Naive thymus-derived CD8-positive, alpha-beta T cell (primary cell): ENCODE measurements at regions of chr2 and their contacts with region 1.

Region 1: GRCh38 chr2:201780674-201781581 is at the start of gene ALS2:
- DNase-seq: peak; percentile 88 to 99 (median 95)
- ATAC-seq: peak; percentile 87 to 91
- H3K4me3 Mint-ChIP-seq: peak within 1 kb of the TSS; percentile 93 to 100 (median 97)
- H3K27ac Mint-ChIP-seq: peak within 1 kb of the TSS; percentile 94 to 100 (median 99)
- H3K4me1 Mint-ChIP-seq: peaks cover 11 to 29% (median 27%) of the 10 kb centered on the region in 4 donors
- H3K27me3 Mint-ChIP-seq: peaks cover 0 to 6% (median 1%) of the 10 kb centered on the region in 5 donors
- polyA plus RNA-seq, gene ALS2: 3.7 to 5.2 (median 4.0) TPM

Region 2: GRCh38 chr2:201628545-201628944 is 152.4 kb before region 1 on chr2:
- POLR2A ChIA-PET with region 1: no interaction called
- DNase-seq: no peak
- ATAC-seq: no peak
- H3K4me3 Mint-ChIP-seq: no peak overlapping the region
- H3K27ac Mint-ChIP-seq: peak overlapping the region in 1 of 10 donors; percentile 22
- H3K4me1 Mint-ChIP-seq: no peaks in the 10 kb centered on the region
- H3K27me3 Mint-ChIP-seq: no peaks in the 10 kb centered on the region

Region 3: DNA sequence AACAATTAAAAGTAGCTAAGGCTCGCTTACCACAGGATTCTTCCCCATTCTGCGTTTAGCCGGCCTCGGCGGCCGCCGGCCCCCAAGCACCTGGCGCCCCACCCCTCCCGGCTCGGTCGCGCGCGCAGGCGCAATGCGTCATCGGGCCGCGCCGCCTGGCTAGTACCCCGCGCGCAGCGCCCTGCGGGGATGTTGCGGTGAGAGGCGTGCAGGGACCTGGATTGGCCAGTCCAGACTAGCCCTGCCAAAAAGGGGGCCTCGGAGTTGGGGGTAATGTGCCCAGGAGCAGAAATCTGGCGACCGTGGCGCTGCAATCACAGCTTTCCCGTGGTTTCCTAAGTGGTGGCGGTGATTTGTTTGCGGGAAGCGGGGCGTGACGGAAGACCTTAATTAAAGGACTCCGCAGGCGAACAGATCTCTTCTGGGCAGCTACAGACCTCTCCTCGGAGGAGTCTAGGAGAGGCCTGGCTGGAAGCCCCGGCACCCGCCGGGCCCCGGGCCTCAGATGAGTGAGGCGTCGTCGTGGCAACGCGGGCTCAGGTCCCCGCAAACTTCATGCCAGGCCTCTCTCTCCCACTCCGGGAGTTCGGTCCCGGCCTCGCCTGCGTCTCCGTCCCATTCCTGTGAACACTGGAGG is 138.2 kb before region 1 on chr2:
- POLR2A ChIA-PET with region 1: interaction called, 13 read pairs
- DNase-seq: peak in 9 of 10 donors; percentile 72 to 92 (median 87)
- ATAC-seq: peak; percentile 87 to 89
- H3K4me3 Mint-ChIP-seq: peak overlapping the region; percentile 81 to 99 (median 96)
- H3K27ac Mint-ChIP-seq: peak overlapping the region; percentile 93 to 100 (median 98)
- H3K4me1 Mint-ChIP-seq: peaks cover 5 to 13% (median 10%) of the 10 kb centered on the region in 4 donors
- H3K27me3 Mint-ChIP-seq: no peaks in the 10 kb centered on the region

Region 4: GRCh38 chr2:201654616-201655384 is 126.1 kb before region 1 on chr2:
- POLR2A ChIA-PET with region 1: no interaction called
- DNase-seq: no peak
- ATAC-seq: no peak
- H3K4me3 Mint-ChIP-seq: no peak overlapping the region
- H3K27ac Mint-ChIP-seq: no peak overlapping the region
- H3K4me1 Mint-ChIP-seq: peaks cover 0 to 3% (median 0%) of the 10 kb centered on the region in 4 donors
- H3K27me3 Mint-ChIP-seq: peaks cover 3 to 20% (median 11%) of the 10 kb centered on the region in 5 donors

Region 5: GRCh38 chr2:201754717-201755415 is 26.1 kb before region 1 on chr2:
- POLR2A ChIA-PET with region 1: no interaction called
- DNase-seq: no peak
- ATAC-seq: no peak
- H3K4me3 Mint-ChIP-seq: no peak overlapping the region
- H3K27ac Mint-ChIP-seq: no peak overlapping the region
- H3K4me1 Mint-ChIP-seq: no peaks in the 10 kb centered on the region
- H3K27me3 Mint-ChIP-seq: no peaks in the 10 kb centered on the region

Region 6: GRCh38 chr2:201860636-201861066 is 79.7 kb after region 1 on chr2:
- POLR2A ChIA-PET with region 1: no interaction called
- DNase-seq: peak in 8 of 10 donors; percentile 11 to 66 (median 39)
- ATAC-seq: peak; percentile 72 to 85
- H3K4me3 Mint-ChIP-seq: peak overlapping the region in 2 of 10 donors; percentile 47 to 59
- H3K27ac Mint-ChIP-seq: no peak overlapping the region
- H3K4me1 Mint-ChIP-seq: peaks cover 12 to 24% (median 16%) of the 10 kb centered on the region in 4 donors
- H3K27me3 Mint-ChIP-seq: peaks cover 11 to 30% (median 15%) of the 10 kb centered on the region in 5 donors